Common myeloid progenitor, CD34-positive (primary cell): ENCODE measurements at regions of chr1 and their contacts with region 1.

Region 1: DNA sequence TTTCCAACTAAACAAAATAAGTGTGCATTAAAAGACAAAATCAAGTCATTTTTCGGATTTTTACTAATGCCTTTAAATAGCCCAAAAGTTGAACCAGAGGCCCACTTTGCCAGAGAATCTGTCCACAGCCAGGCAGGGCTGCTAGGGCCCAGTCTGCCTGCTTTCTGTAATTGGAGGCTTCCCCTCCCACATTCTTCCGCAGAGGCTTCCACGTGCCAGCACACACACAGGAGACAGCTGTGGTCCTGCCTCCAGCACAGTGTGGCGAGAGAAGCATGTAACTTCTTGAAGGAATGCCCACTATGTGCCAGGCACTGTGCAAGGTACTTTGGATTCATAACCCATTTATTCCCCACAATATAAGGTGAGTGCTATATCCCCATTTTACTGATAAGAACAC is 11.3 kb upstream of the PDZK1IP1 start:
- DNase-seq: peak in 1 of 3 donors; percentile 49
- H3K4me3 ChIP-seq: no peak overlapping the region
- H3K27ac ChIP-seq: no peak overlapping the region
- H3K4me1 ChIP-seq: peaks cover 0 to 18% (median 3%) of the 10 kb centered on the region in 4 experiments
- H3K27me3 ChIP-seq: no peaks in the 10 kb centered on the region

Region 2: GRCh38 chr1:47225430-47226100 is 24.4 kb after region 1 on chr1:
- CTCF ChIA-PET with region 1: interaction called, 11 read pairs
- POLR2A ChIA-PET with region 1: no interaction called
- DNase-seq: peak in 2 of 3 donors; percentile 46 to 52
- H3K4me3 ChIP-seq: peak overlapping the region; percentile 25 to 85 (median 67)
- H3K27ac ChIP-seq: peak overlapping the region in 1 of 2 experiments; percentile 97
- H3K4me1 ChIP-seq: peaks cover 0 to 68% (median 57%) of the 10 kb centered on the region in 4 experiments
- H3K27me3 ChIP-seq: no peaks in the 10 kb centered on the region